HCT116 (cell line): ENCODE measurements at regions of chr4 and their contacts with region 1.

Region 1: GRCh38 chr4:95095348-95095974 is 337.7 kb downstream of the BMPR1B start:
- DNase-seq: peak; percentile 7
- ATAC-seq: peak; percentile 74
- H3K4me3 ChIP-seq: no peak overlapping the region
- H3K27ac ChIP-seq: no peak overlapping the region
- H3K4me1 ChIP-seq: no peaks in the 10 kb centered on the region
- H3K27me3 ChIP-seq: no peaks in the 10 kb centered on the region
- CTCF ChIP-seq: peak; percentile 59 to 73 (median 68); a peak in 5 of 6 replicates
- POLR2A ChIP-seq: no peak
- RAD21 ChIP-seq: peak; percentile 76

Region 2: GRCh38 chr4:94406668-94407437 is 688.6 kb before region 1 on chr4:
- CTCF ChIA-PET with region 1: no interaction called
- POLR2A ChIA-PET with region 1: no interaction called
- RAD21 ChIA-PET with region 1: no interaction called
- intact Hi-C with region 1: loop called (anchors 10 kb)
- DNase-seq: peak; percentile 73
- ATAC-seq: peak; percentile 89
- H3K4me3 ChIP-seq: no peak overlapping the region
- H3K27ac ChIP-seq: no peak overlapping the region
- H3K4me1 ChIP-seq: peaks cover 18 to 19% of the 10 kb centered on the region in 2 experiments
- H3K27me3 ChIP-seq: no peaks in the 10 kb centered on the region
- CTCF ChIP-seq: peak; percentile 76 to 85 (median 81)
- POLR2A ChIP-seq: no peak
- RAD21 ChIP-seq: peak; percentile 90

Region 3: GRCh38 chr4:94621491-94622080 is 473.9 kb before region 1 on chr4:
- CTCF ChIA-PET with region 1: interaction called, 5 read pairs
- POLR2A ChIA-PET with region 1: no interaction called
- RAD21 ChIA-PET with region 1: interaction called in 1 of 2 experiments, 6 read pairs
- intact Hi-C with region 1: loop called (anchors 1 kb)
- DNase-seq: peak; percentile 38
- ATAC-seq: 0 out of 2 replicates have a peak, but pooled peaks have one; percentile 38
- H3K4me3 ChIP-seq: no peak overlapping the region
- H3K27ac ChIP-seq: no peak overlapping the region
- H3K4me1 ChIP-seq: no peaks in the 10 kb centered on the region
- H3K27me3 ChIP-seq: no peaks in the 10 kb centered on the region
- CTCF ChIP-seq: peak; percentile 60 to 81 (median 70); a peak in 5 of 6 replicates
- POLR2A ChIP-seq: no peak
- RAD21 ChIP-seq: peak; percentile 79

Region 4: GRCh38 chr4:94746750-94747149 is 348.7 kb before region 1 on chr4:
- CTCF ChIA-PET with region 1: interaction called, 3 read pairs
- POLR2A ChIA-PET with region 1: no interaction called
- RAD21 ChIA-PET with region 1: no interaction called
- intact Hi-C with region 1: loop called (anchors 1 kb)
- DNase-seq: no peak
- ATAC-seq: peak; percentile 52; the same call in 1 of the 2 replicates
- H3K4me3 ChIP-seq: no peak overlapping the region
- H3K27ac ChIP-seq: no peak overlapping the region
- H3K4me1 ChIP-seq: no peaks in the 10 kb centered on the region
- H3K27me3 ChIP-seq: no peaks in the 10 kb centered on the region
- CTCF ChIP-seq: peak; percentile 23 to 39 (median 29); a peak in 3 of 6 replicates
- POLR2A ChIP-seq: no peak
- RAD21 ChIP-seq: peak; percentile 61

Region 5: GRCh38 chr4:95124906-95125504 is 29.5 kb after region 1 on chr4:
- CTCF ChIA-PET with region 1: interaction called, 3 read pairs
- POLR2A ChIA-PET with region 1: no interaction called
- RAD21 ChIA-PET with region 1: no interaction called
- intact Hi-C with region 1: loop called (anchors 2 kb)
- DNase-seq: peak; percentile 56
- ATAC-seq: peak; percentile 94
- H3K4me3 ChIP-seq: no peak overlapping the region
- H3K27ac ChIP-seq: no peak overlapping the region
- H3K4me1 ChIP-seq: peaks cover 4% of the 10 kb centered on the region in 2 experiments; a peak in 3 of 4 replicates
- H3K27me3 ChIP-seq: no peaks in the 10 kb centered on the region
- CTCF ChIP-seq: peak; percentile 49 to 66 (median 63)
- POLR2A ChIP-seq: no peak
- RAD21 ChIP-seq: peak; percentile 73